ENCODE measurements at regions of chr12 and their contacts with region 1.

Region 1: DNA sequence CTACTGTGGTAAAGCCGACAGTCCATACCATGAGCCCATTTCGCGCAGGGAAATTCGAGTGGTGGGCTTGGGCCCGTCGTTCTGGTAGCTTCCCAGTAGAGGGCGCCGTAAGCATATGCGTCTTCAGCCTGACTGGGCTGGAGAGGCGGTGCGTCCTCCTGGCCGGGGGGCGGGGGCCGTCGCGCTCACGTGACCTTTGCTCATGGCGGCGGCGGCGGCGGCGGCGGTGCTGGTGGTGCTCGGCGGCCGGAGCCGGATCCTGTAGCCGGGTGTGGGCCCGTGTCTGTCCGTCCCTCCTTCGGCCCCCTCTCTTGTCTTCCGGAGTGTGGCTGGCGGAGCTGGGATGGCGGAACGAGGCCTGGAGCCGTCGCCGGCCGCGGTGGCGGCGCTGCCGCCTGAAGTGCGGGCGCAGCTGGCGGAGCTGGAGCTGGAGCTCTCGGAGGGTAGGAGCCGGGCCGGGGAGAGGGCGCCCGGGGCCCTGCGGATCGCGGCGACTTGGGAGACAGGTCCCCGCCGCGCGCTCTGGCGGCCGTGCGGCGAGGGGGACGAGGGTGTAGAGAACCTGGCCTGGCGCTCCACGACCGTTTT is at the start of gene DIP2B:
- DNase-seq: peak; percentile 93
- H3K4me3 Mint-ChIP-seq: peak within 1 kb of the TSS; percentile 95
- H3K27ac Mint-ChIP-seq: peak within 1 kb of the TSS; percentile 95
- H3K4me1 Mint-ChIP-seq: peaks cover 51% of the 10 kb centered on the region
- H3K27me3 Mint-ChIP-seq: peaks cover 2% of the 10 kb centered on the region
- total RNA-seq, gene DIP2B: 26.7 and 27.6 TPM in 2 replicates

Region 2: GRCh38 chr12:50162230-50162629 is 342.7 kb before region 1 on chr12:
- intact Hi-C with region 1: no loop called
- DNase-seq: no peak
- H3K4me3 Mint-ChIP-seq: no peak overlapping the region
- H3K27ac Mint-ChIP-seq: no peak overlapping the region
- H3K4me1 Mint-ChIP-seq: peaks cover 40% of the 10 kb centered on the region
- H3K27me3 Mint-ChIP-seq: no peaks in the 10 kb centered on the region

Region 3: GRCh38 chr12:50542448-50542847 is 37.6 kb after region 1 on chr12:
- intact Hi-C with region 1: loop called (anchors 1 kb)
- DNase-seq: no peak
- H3K4me3 Mint-ChIP-seq: no peak overlapping the region
- H3K27ac Mint-ChIP-seq: peak overlapping the region; percentile 84
- H3K4me1 Mint-ChIP-seq: peaks cover 28% of the 10 kb centered on the region
- H3K27me3 Mint-ChIP-seq: no peaks in the 10 kb centered on the region

Region 4: DNA sequence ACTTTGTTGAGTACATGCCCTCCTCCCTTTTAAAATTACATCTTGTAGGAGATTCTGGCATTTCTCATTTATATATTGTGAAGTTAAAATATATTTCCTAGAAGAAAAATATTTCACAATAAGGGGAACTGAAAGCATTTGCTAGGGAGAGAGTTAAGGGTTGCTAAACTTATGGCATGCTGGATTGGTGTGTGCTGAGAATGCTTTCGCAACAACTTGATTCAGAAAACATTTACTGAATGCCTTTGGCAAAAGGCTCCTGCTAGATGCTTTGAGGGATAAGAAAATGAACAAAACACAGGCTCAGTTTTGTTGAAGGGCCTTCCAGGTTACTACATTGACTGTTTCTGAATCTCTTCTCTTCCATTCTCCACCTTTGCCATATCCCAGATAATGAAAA is 67.4 kb after region 1 on chr12:
- intact Hi-C with region 1: no loop called
- DNase-seq: no peak
- H3K4me3 Mint-ChIP-seq: no peak overlapping the region
- H3K27ac Mint-ChIP-seq: no peak overlapping the region
- H3K4me1 Mint-ChIP-seq: peaks cover 14% of the 10 kb centered on the region
- H3K27me3 Mint-ChIP-seq: no peaks in the 10 kb centered on the region

Region 5: DNA sequence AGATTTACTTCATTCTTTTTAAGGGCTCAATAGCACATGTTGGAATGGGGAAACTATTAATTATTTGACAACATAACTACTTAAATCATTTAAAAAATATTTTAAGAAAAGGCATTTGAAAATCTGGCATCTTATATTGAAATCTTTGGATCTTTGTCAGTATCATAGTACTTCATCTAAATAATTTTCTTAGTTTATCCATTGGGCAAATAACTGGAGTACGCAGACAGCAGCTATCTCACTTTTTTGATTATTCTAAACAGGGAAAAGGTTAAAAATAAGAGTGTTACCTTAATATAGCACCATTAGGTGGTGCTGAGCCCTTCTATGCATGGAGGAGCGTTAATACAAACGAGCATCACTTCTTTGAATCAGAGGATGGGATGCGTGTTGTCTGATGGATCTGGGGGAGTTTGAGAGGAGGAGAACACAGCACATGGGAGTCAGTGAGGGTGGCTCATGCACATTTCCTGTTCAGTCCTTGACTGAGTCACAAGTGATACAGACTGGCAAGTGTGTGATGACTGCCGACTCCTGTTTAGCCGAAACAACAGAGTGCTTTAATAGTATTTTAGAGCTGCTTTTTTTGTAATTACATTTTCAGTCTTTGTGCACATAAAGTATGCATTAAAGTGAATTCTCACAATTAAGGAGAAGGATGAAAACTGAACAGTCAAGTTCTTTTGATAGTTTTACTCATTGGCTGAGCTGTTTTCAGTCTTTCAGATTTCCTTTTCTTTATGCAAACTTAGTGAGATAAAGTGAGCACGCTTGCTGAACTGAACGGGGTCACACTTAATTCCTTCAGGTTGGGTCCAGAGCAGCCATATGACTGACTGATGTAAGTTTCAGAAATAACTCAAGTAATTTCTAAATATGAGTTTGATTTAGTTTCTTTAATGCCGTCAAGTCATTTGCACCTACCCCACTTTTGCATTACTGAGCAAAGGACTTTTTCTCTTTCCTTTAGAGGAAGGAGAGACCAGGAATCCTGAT is 92.6 kb after region 1 on chr12:
- intact Hi-C with region 1: loop called (anchors 1 kb)
- DNase-seq: peak; percentile 26
- H3K4me3 Mint-ChIP-seq: peak overlapping the region; percentile 28
- H3K27ac Mint-ChIP-seq: peak overlapping the region; percentile 35
- H3K4me1 Mint-ChIP-seq: peaks cover 31% of the 10 kb centered on the region
- H3K27me3 Mint-ChIP-seq: no peaks in the 10 kb centered on the region

Region 6: GRCh38 chr12:50734409-50735263 is 229.7 kb after region 1 on chr12:
- intact Hi-C with region 1: loop called (anchors 1 kb)
- DNase-seq: no peak
- H3K4me3 Mint-ChIP-seq: no peak overlapping the region
- H3K27ac Mint-ChIP-seq: no peak overlapping the region
- H3K4me1 Mint-ChIP-seq: no peaks in the 10 kb centered on the region
- H3K27me3 Mint-ChIP-seq: no peaks in the 10 kb centered on the region